Dorsolateral prefrontal cortex (tissue), 120 donors: ENCODE measurements at regions of chr10 and their contacts with region 1.

Region 1: GRCh38 chr10:126017961-126018560 is 121.7 kb downstream of the FANK1 start:
- DNase-seq: no peak
- H3K4me3 ChIP-seq: no peak overlapping the region
- H3K27ac ChIP-seq: no peak overlapping the region
- H3K27me3 ChIP-seq: no peaks in the 10 kb centered on the region
- CTCF ChIP-seq: no peak

Region 2: GRCh38 chr10:126148227-126148587 is 130.1 kb after region 1 on chr10:
- intact Hi-C with region 1: loop called in 1 of 2 experiments (anchors 5 kb)
- DNase-seq: no peak
- H3K4me3 ChIP-seq: no peak overlapping the region
- H3K27ac ChIP-seq: peak overlapping the region in 12 of 59 donors; percentile 2 to 65 (median 32)
- H3K27me3 ChIP-seq: no peaks in the 10 kb centered on the region
- CTCF ChIP-seq: no peak